GM10248 (cell line): ENCODE measurements at regions of chr5 and their contacts with region 1.

Region 1: GRCh38 chr5:72611118-72611730 is 104.0 kb upstream of the ZNF366 start:
- DNase-seq: peak; percentile 63
- CTCF ChIP-seq: peak; percentile 71

Region 2: GRCh38 chr5:72470826-72471225 is 140.4 kb before region 1 on chr5:
- CTCF ChIA-PET with region 1: no interaction called
- POLR2A ChIA-PET with region 1: no interaction called
- DNase-seq: no peak
- CTCF ChIP-seq: no peak

Region 3: DNA sequence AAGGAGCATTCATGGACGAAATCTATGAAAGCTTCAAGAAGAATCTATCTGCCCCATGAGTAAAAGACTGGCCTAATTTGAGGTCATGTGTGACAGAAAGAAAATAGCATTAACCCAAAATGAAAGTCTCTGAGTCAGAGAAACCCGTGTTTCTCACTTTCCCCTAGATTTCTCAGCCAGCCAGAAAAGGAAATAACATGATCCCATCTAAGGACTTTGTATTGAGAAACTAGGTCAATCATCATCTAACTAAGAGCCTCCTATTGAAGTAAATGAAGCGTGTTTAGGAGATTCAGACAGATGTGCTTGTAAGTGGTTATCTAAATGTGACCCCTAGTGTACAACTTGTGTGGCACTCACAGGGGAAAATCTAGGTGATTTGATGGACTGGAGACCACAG is 26.8 kb before region 1 on chr5:
- CTCF ChIA-PET with region 1: interaction called, 46 read pairs
- POLR2A ChIA-PET with region 1: no interaction called
- DNase-seq: peak; percentile 44
- CTCF ChIP-seq: no peak

Region 4: DNA sequence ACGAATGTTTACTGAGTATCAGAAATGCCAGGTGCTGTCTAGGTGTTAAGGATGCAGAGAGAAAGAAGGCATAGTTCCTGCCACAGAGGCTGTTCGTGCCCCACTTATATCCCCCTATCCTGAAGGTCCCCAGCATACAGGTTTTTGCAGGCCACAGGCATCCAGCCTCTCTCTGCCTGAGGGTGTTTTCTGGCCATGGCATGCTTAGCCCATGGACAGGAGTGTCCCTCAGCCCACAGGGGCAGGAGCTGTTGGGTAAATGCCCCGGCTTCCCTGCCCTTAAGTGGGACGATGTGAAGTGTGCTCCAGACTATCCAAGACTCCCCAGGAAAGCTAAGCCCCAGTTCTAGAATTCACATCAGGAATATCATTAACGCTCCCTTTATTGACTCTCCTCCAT is 17.0 kb before region 1 on chr5:
- CTCF ChIA-PET with region 1: interaction called, 46 read pairs
- POLR2A ChIA-PET with region 1: no interaction called
- DNase-seq: no peak
- CTCF ChIP-seq: no peak

Region 5: GRCh38 chr5:72628771-72629371 is 17.6 kb after region 1 on chr5:
- CTCF ChIA-PET with region 1: interaction called, 11 read pairs
- POLR2A ChIA-PET with region 1: no interaction called
- DNase-seq: no peak
- CTCF ChIP-seq: no peak